Body of pancreas (tissue), 4 donors: ENCODE measurements at regions of chr1 and their contacts with region 1.

Region 1: GRCh38 chr1:183622884-183623785 is 12.4 kb downstream of the ARPC5 start:
- DNase-seq: peak; percentile 49 to 66 (median 56)
- ATAC-seq: peak; percentile 78
- H3K4me3 ChIP-seq: no peak overlapping the region
- H3K27ac ChIP-seq: no peak overlapping the region
- H3K4me1 ChIP-seq: peaks cover 26% of the 10 kb centered on the region
- H3K27me3 ChIP-seq: no peaks in the 10 kb centered on the region
- CTCF ChIP-seq: peak in 6 of 7 experiments; percentile 41 to 64 (median 59)
- POLR2A ChIP-seq: no peak

Region 2: DNA sequence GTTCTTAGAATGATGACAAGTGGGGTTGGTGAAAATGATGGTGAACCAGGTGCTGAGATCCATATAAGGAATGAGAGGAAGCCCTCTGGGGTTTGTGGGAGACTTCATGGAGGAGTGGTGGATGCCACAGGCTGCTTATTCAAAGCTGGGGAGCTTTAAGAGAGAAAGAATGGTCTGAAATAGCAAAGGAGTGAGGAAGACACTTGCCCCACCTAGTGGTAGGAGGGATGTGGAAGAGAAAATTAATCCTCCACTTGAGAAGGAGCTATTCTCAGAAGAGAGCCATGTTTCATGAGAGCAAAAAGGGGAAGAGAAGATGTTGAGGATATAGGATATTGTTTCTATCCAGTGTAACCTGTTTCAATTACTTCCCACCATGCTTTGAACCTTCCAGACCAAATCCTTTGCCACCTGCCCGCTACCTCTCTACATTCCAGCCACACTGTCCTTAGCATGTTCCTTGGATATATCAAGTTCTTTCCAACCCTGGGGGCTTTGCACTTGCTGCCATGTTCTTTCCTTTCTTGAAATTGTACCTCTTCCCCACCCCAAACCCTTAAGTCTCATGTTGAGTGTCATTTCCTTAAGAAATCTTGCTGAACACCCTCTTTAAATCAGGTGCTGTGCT is 1542.1 kb before region 1 on chr1:
- intact Hi-C with region 1: no loop called
- DNase-seq: peak in 3 of 4 donors; percentile 35 to 48 (median 38)
- ATAC-seq: no peak
- H3K4me3 ChIP-seq: no peak overlapping the region
- H3K27ac ChIP-seq: no peak overlapping the region
- H3K4me1 ChIP-seq: peaks cover 9% of the 10 kb centered on the region
- H3K27me3 ChIP-seq: no peaks in the 10 kb centered on the region
- CTCF ChIP-seq: peak; percentile 39 to 70 (median 61)
- POLR2A ChIP-seq: no peak

Region 3: GRCh38 chr1:183461350-183461749 is 161.8 kb before region 1 on chr1:
- intact Hi-C with region 1: loop called (anchors 10 kb)
- DNase-seq: peak in 3 of 4 donors; percentile 7 to 37 (median 13)
- ATAC-seq: no peak
- H3K4me3 ChIP-seq: no peak overlapping the region
- H3K27ac ChIP-seq: no peak overlapping the region
- H3K4me1 ChIP-seq: no peaks in the 10 kb centered on the region
- H3K27me3 ChIP-seq: no peaks in the 10 kb centered on the region
- CTCF ChIP-seq: no peak
- POLR2A ChIP-seq: no peak